Endothelial cell of umbilical vein (primary cell): ENCODE measurements at regions of chr2 and their contacts with region 1.

Region 1: DNA sequence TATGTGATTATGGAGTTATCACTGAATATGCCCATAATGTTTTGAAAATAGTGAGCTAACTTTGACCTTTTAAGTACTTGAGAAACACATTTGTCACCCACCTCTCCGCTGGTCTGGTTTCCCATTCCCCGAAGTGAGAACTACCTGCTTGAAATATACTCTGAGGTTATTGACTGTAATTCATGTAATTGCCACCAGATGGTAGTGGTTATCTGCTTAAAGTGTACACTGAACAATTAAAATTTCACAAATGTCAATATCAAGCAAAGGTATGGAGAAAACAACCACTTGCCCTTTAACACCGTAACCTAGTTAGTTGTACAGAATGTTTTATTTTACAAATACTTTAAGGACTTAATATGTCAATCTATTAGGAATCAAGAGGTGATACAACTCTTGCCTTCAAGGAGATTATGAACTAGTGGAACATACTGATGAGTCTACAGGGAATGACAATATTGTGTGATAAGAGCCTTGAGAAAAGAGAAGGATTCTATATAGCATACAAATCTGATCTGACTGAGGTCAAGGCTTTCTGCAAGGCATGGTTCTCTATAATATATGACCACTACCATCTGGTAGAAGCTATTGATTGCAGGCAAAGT is 316.8 kb upstream of the KCNH7 start:
- DNase-seq: peak; percentile 59
- H3K4me3 ChIP-seq: no peak overlapping the region
- H3K27ac ChIP-seq: no peak overlapping the region
- H3K4me1 ChIP-seq: peaks cover 25% of the 10 kb centered on the region
- H3K27me3 ChIP-seq: no peaks in the 10 kb centered on the region
- CTCF ChIP-seq: peak; percentile 32 to 34
- POLR2A ChIP-seq: no peak

Region 2: GRCh38 chr2:163191372-163191771 is 36.0 kb after region 1 on chr2:
- CTCF ChIA-PET with region 1: interaction called, 3 read pairs
- POLR2A ChIA-PET with region 1: no interaction called
- dilution Hi-C with region 1: no loop called
- intact Hi-C with region 1: loop called (anchors 1 kb)
- DNase-seq: peak; percentile 64
- H3K4me3 ChIP-seq: no peak overlapping the region
- H3K27ac ChIP-seq: no peak overlapping the region
- H3K4me1 ChIP-seq: peaks cover 19% of the 10 kb centered on the region
- H3K27me3 ChIP-seq: no peaks in the 10 kb centered on the region
- CTCF ChIP-seq: peak; percentile 45 to 47
- POLR2A ChIP-seq: no peak

Region 3: GRCh38 chr2:164388511-164388910 is 1233.1 kb after region 1 on chr2:
- CTCF ChIA-PET with region 1: no interaction called
- POLR2A ChIA-PET with region 1: no interaction called
- dilution Hi-C with region 1: no loop called
- intact Hi-C with region 1: loop called (anchors 5 kb)
- DNase-seq: peak; percentile 77
- H3K4me3 ChIP-seq: no peak overlapping the region
- H3K27ac ChIP-seq: peak overlapping the region; percentile 44
- H3K4me1 ChIP-seq: peaks cover 12% of the 10 kb centered on the region
- H3K27me3 ChIP-seq: no peaks in the 10 kb centered on the region
- CTCF ChIP-seq: no peak
- POLR2A ChIP-seq: no peak

Region 4: GRCh38 chr2:164479460-164479859 is 1324.1 kb after region 1 on chr2:
- CTCF ChIA-PET with region 1: interaction called, 43 read pairs
- POLR2A ChIA-PET with region 1: no interaction called
- dilution Hi-C with region 1: no loop called
- intact Hi-C with region 1: loop called (anchors 1 kb)
- DNase-seq: peak; percentile 58
- H3K4me3 ChIP-seq: no peak overlapping the region
- H3K27ac ChIP-seq: no peak overlapping the region
- H3K4me1 ChIP-seq: no peaks in the 10 kb centered on the region
- H3K27me3 ChIP-seq: no peaks in the 10 kb centered on the region
- CTCF ChIP-seq: peak; percentile 13 to 28
- POLR2A ChIP-seq: no peak

Region 5: GRCh38 chr2:164538240-164538866 is 1383.0 kb after region 1 on chr2:
- CTCF ChIA-PET with region 1: interaction called, 5 read pairs
- POLR2A ChIA-PET with region 1: no interaction called
- dilution Hi-C with region 1: no loop called
- intact Hi-C with region 1: loop called (anchors 2 kb)
- DNase-seq: peak; percentile 56
- H3K4me3 ChIP-seq: no peak overlapping the region
- H3K27ac ChIP-seq: no peak overlapping the region
- H3K4me1 ChIP-seq: peaks cover 5% of the 10 kb centered on the region
- H3K27me3 ChIP-seq: no peaks in the 10 kb centered on the region
- CTCF ChIP-seq: peak; percentile 58 to 68
- POLR2A ChIP-seq: no peak

Region 6: DNA sequence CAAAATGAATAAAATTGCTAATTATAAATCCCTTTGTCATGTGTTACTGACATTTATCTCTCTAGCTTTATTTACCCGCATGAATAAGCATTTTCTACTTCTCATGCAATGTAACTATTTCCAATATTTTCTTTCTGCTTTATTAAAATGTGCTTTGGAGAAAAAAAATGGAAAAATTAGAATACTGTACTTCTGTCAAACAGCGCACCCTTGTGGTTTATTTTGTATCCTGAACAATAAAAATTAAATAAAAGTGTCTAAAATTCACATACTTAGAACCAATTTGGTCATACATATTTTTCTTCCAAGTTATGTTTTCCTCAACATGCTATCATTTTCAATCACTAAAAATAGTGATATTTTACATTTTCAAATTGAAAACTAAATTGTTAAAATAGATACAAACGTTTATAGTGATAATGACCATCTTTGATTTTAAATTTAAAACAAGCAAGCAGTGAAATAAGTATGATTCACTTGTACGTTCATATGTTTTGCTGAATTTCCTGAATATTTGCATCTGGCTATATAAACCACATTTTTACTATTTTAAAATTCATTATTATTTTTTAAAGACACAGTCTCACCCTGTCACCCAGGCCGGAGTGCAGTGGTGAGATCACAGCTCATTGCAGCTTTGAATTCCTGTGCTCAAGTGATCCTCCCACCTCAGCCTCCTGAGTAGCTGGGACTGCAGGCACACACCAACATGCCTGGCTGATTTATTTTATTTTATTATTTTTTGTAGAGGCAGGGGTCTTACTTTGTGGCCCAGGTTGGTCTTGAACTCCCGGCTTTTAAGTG is 1561.8 kb after region 1 on chr2:
- CTCF ChIA-PET with region 1: no interaction called
- POLR2A ChIA-PET with region 1: no interaction called
- dilution Hi-C with region 1: no loop called
- intact Hi-C with region 1: loop called (anchors 5 kb)
- DNase-seq: peak; percentile 46
- H3K4me3 ChIP-seq: no peak overlapping the region
- H3K27ac ChIP-seq: no peak overlapping the region
- H3K4me1 ChIP-seq: no peaks in the 10 kb centered on the region
- H3K27me3 ChIP-seq: no peaks in the 10 kb centered on the region
- CTCF ChIP-seq: peak; percentile 10 to 37
- POLR2A ChIP-seq: no peak